WTC11 (cell line): ENCODE measurements at regions of chr5 and their contacts with region 1.

Region 1: DNA sequence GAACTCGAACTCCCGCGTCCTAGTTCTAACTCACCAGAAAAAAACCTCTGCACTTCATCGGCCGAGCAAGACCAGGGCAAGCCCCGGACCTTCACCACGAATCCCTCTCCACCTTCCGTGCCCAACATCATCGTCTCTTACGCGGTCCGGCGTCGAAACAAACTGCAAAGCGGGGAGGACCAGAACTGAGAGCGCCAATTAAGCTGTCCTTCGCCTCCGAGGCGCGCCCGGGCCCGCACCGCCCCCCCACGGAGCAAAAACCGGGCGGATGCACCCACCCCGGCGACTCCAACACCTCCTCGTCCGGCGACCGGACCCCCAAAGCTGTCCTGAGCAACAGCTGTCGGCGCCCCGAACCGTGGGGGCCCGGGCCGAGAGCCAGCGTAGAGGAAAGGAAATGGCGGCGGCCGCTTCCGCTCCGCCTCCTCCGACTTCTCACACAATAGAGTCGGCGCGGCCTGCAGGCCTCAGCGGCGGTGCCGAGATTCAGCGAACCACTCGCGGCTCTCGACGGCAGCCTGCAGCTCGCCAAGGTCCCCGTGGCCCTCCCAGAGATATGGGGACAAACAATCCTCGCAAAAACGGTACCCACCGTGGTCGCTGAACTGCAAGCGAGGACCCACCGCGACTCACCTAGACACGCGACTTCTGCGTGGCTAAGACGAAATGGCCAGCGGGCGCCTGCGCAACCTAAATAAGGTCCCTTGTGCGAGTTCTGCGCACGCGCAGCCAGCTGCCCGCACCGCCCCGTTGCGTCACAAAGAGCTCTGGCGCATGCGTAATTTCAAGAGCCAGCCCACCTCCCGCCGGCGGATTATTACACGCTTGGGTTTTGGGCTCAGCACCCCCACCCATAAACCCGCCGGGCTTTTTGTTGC is at the start of gene HNRNPH1:
- DNase-seq: peak; percentile 97
- ATAC-seq: peak; percentile 62
- H3K4me3 Mint-ChIP-seq: peak within 1 kb of the TSS; percentile 96
- H3K27ac Mint-ChIP-seq: peak within 1 kb of the TSS; percentile 99
- H3K4me1 Mint-ChIP-seq: peaks cover 42% of the 10 kb centered on the region
- H3K27me3 Mint-ChIP-seq: no peaks in the 10 kb centered on the region
- CTCF ChIP-seq: no peak; the same call in 1 of the 2 replicates
- total RNA-seq, gene HNRNPH1: 671 to 865 TPM (median 709 TPM) in 3 replicates

Region 2: GRCh38 chr5:179559284-179560252 is 63.7 kb before region 1 on chr5:
- CTCF ChIA-PET with region 1: interaction called, 6 read pairs
- POLR2A ChIA-PET with region 1: interaction called, 19 read pairs
- DNase-seq: peak; percentile 98
- ATAC-seq: peak; percentile 98
- H3K4me3 Mint-ChIP-seq: peak overlapping the region; percentile 97
- H3K27ac Mint-ChIP-seq: peak overlapping the region; percentile 99
- H3K4me1 Mint-ChIP-seq: peaks cover 25% of the 10 kb centered on the region
- H3K27me3 Mint-ChIP-seq: no peaks in the 10 kb centered on the region
- CTCF ChIP-seq: no peak

Region 3: GRCh38 chr5:179599975-179600391 is 23.3 kb before region 1 on chr5:
- CTCF ChIA-PET with region 1: interaction called, 3 read pairs
- POLR2A ChIA-PET with region 1: interaction called, 12 read pairs
- DNase-seq: no peak
- ATAC-seq: no peak
- H3K4me3 Mint-ChIP-seq: no peak overlapping the region
- H3K27ac Mint-ChIP-seq: no peak overlapping the region
- H3K4me1 Mint-ChIP-seq: no peaks in the 10 kb centered on the region
- H3K27me3 Mint-ChIP-seq: no peaks in the 10 kb centered on the region
- CTCF ChIP-seq: no peak

Region 4: GRCh38 chr5:179643556-179643955 is 20.3 kb after region 1 on chr5:
- CTCF ChIA-PET with region 1: no interaction called
- POLR2A ChIA-PET with region 1: no interaction called
- DNase-seq: no peak
- ATAC-seq: no peak
- H3K4me3 Mint-ChIP-seq: no peak overlapping the region
- H3K27ac Mint-ChIP-seq: no peak overlapping the region
- H3K4me1 Mint-ChIP-seq: no peaks in the 10 kb centered on the region
- H3K27me3 Mint-ChIP-seq: no peaks in the 10 kb centered on the region; the same call in 1 of the 2 replicates
- CTCF ChIP-seq: no peak

Region 5: GRCh38 chr5:179668391-179668790 is 45.1 kb after region 1 on chr5:
- CTCF ChIA-PET with region 1: interaction called, 37 read pairs
- POLR2A ChIA-PET with region 1: interaction called, 10 read pairs
- DNase-seq: peak; percentile 82
- ATAC-seq: peak; percentile 97
- H3K4me3 Mint-ChIP-seq: no peak overlapping the region
- H3K27ac Mint-ChIP-seq: no peak overlapping the region
- H3K4me1 Mint-ChIP-seq: no peaks in the 10 kb centered on the region; the same call in 1 of the 2 replicates
- H3K27me3 Mint-ChIP-seq: no peaks in the 10 kb centered on the region
- CTCF ChIP-seq: peak; percentile 88

Region 6: GRCh38 chr5:179678223-179679013 is 55.2 kb after region 1 on chr5:
- CTCF ChIA-PET with region 1: no interaction called
- POLR2A ChIA-PET with region 1: interaction called, 15 read pairs
- DNase-seq: peak; percentile 93
- ATAC-seq: peak; percentile 86
- H3K4me3 Mint-ChIP-seq: peak overlapping the region; percentile 92
- H3K27ac Mint-ChIP-seq: peak overlapping the region; percentile 57; the same call in 1 of the 2 replicates
- H3K4me1 Mint-ChIP-seq: peaks cover 13% of the 10 kb centered on the region
- H3K27me3 Mint-ChIP-seq: peaks cover 15% of the 10 kb centered on the region
- CTCF ChIP-seq: no peak; the same call in 1 of the 2 replicates

Region 7: DNA sequence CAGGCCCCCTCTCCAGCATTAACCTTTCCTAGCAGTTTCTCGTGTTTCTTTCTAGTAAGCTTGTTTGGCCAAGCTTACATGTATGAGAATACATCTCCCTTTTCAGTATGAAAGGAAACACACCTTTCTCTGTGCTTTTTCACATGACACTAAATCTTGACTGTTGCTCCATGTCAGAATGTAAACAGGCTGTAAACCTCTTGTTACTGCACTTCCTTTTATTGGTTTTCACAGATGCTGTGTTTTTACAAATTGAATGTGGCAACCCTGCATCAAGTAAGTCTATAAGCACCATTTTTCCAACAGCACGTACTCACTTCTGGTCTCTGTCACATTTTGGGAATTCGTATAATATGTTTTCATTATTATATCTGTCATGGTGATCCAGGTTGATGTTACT is 73.4 kb after region 1 on chr5:
- CTCF ChIA-PET with region 1: interaction called, 3 read pairs
- POLR2A ChIA-PET with region 1: interaction called, 10 read pairs
- DNase-seq: no peak
- ATAC-seq: no peak
- H3K4me3 Mint-ChIP-seq: no peak overlapping the region
- H3K27ac Mint-ChIP-seq: peak overlapping the region; percentile 69
- H3K4me1 Mint-ChIP-seq: peaks cover 21% of the 10 kb centered on the region
- H3K27me3 Mint-ChIP-seq: no peaks in the 10 kb centered on the region; the same call in 1 of the 2 replicates
- CTCF ChIP-seq: no peak